ENCODE measurements at regions of chr9 and their contacts with region 1.

Region 1: DNA sequence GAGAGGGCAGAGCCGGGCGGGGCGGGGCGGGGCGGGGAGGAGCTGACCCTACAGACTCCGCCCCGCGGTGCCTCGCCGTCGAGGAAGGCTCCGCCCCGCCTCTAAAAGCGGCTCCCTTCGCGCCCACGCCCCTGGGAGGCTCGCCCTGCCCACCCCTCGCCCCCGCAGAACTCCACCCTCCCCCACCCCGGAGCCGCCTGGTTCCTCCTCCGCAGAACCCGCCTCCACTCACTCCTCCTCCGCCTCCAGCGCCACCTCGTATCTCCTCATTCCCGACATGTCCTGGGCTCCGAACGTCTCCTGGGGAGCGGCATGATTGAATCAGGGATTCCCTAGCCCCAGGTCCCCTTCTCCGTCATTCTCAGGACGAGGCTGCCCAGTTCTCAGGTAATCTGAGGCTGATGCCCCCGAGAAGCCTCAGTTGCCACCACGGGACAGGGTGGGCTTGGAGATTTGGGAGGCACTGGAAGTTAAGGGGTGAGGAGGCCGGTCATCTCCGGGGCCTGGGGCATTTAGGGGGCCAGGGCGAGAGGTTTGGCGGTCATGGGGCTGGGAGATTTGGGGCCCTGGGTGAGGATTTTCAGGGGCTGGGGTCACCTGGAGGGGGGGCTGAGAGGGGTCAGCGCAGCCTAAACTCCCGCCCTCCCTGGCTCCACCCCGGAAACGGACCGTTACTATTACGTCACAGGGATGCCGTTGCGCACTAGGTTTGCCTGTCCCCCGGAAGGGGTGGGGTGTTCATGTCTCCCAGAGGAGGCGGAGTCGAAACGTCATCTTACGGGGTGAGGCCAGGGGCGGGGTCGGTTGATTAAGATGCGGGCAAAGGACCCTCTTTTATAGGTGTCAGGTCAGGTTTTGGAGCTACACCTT is 3.2 kb upstream of the CCL27 start:
- DNase-seq: peak; percentile 79
- H3K4me3 ChIP-seq: peak overlapping the region; percentile 49 to 69 (median 64)
- H3K27ac ChIP-seq: peak overlapping the region; percentile 78
- H3K4me1 ChIP-seq: peaks cover 5% of the 10 kb centered on the region
- H3K27me3 ChIP-seq: no peaks in the 10 kb centered on the region
- CTCF ChIP-seq: no peak
- POLR2A ChIP-seq: peak; percentile 71

Region 2: DNA sequence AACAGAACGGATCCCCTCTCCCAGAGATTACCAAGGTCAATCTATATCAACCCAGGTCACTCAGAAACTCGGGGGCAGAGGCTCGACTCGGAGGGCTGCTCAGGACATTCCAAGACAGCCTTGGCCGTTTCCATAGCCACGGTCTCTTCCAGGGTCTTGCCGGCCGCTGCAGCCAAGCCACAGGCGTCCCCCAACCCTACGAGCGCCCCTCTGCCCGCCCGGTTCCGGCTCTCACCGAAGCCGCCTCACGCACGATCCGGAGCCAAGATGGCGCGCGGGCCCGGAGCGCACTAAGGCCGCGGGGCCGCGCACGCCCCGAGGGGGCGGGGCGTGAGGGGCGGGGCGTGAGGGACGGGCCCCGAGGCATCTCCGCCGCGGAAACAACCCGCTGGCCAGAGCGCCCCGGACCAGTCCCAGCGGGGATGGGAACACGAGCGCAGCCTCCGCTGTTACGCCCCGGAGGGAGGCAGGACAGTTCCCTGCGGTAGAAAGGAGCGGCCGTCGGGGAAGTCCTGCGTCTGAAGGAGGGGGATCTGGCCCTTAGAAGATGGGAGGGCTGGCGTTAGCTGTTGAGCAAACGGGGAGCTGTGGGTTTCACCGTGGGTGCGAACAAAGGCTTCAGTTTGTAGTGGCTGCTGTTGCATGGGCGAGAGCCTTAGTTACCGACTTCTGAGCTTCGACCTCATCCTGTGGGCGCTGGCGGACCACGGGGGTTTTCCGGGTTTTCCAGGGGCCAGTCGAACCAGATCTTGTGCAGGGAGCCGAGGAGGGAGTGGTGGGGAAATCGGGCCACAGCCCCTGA is 53.6 kb before region 1 on chr9 and contains the start of gene RPP25L:
- CTCF ChIA-PET with region 1: interaction called, 3 read pairs
- POLR2A ChIA-PET with region 1: no interaction called
- dilution Hi-C with region 1: no loop called
- intact Hi-C with region 1: loop called (anchors 2 kb)
- DNase-seq: peak; percentile 83
- H3K4me3 ChIP-seq: peak within 1 kb of the TSS; percentile 41 to 79 (median 77)
- H3K27ac ChIP-seq: peak within 1 kb of the TSS; percentile 72
- H3K4me1 ChIP-seq: peaks cover 13% of the 10 kb centered on the region
- H3K27me3 ChIP-seq: no peaks in the 10 kb centered on the region
- CTCF ChIP-seq: no peak
- POLR2A ChIP-seq: peak; percentile 87
- total RNA-seq, gene RPP25L: 15.1 and 15.7 TPM in 2 replicates

Region 3: DNA sequence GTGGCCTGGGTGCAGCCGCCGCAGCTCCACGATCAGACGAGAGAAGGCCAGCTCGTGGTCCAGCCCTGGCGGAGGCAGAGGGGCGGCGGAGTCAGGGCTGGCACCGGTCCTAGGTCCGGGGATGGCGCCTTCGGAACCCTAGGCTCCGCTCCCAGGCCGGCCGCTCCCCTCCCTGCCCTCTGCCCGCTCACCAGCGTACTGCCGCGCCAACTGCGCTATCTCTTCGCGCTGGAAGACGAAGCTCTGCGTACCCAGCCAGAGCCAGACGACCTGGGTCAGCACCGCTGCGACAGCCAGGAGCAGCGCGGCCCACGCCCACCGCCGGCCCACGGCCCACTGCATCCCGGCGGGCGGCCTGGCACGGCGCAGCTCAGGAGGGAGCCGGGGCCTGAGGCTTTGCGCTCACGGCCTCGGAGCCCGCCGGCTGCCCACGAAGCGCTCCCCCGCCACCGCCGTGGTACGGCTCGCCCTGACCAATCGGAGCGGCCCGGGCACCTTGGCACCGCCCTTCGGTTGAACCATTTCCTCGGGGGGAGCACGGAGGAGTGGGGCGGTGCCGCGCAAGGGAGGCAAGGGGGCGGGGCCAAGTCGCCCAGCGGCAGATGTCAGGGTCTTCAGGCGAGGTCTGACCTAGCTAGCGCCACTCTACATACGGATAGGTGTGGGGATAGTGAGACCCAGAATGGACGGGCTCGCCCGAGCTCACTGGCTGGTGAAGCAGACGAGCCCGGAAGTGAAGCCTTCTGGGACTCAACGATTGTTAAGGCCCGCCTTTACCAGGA is 28.1 kb before region 1 on chr9 and contains the start of gene SIGMAR1:
- CTCF ChIA-PET with region 1: interaction called, 10 read pairs
- POLR2A ChIA-PET with region 1: interaction called, 3 read pairs
- dilution Hi-C with region 1: no loop called
- intact Hi-C with region 1: loop called (anchors 2 kb)
- DNase-seq: peak; percentile 91
- H3K4me3 ChIP-seq: peak within 1 kb of the TSS; percentile 10 to 63 (median 47)
- H3K27ac ChIP-seq: peak within 1 kb of the TSS; percentile 33
- H3K4me1 ChIP-seq: peaks cover 16% of the 10 kb centered on the region
- H3K27me3 ChIP-seq: no peaks in the 10 kb centered on the region
- CTCF ChIP-seq: no peak
- POLR2A ChIP-seq: peak; percentile 81
- total RNA-seq, gene SIGMAR1: 74.1 and 81.2 TPM in 2 replicates

Region 4: GRCh38 chr9:34646211-34647083 is 19.2 kb before region 1 on chr9 and contains the start of gene GALT:
- CTCF ChIA-PET with region 1: interaction called, 12 read pairs
- POLR2A ChIA-PET with region 1: interaction called, 7 read pairs
- dilution Hi-C with region 1: no loop called
- intact Hi-C with region 1: no loop called
- DNase-seq: peak; percentile 88
- H3K4me3 ChIP-seq: peak within 1 kb of the TSS; percentile 53 to 78 (median 75)
- H3K27ac ChIP-seq: peak within 1 kb of the TSS; percentile 41
- H3K4me1 ChIP-seq: peaks cover 17% of the 10 kb centered on the region
- H3K27me3 ChIP-seq: no peaks in the 10 kb centered on the region
- CTCF ChIP-seq: peak in 1 of 2 donors; percentile 54
- POLR2A ChIP-seq: peak; percentile 51
- total RNA-seq, gene GALT: 30.0 and 36.6 TPM in 2 replicates

Region 5: GRCh38 chr9:34651876-34652601 is 13.6 kb before region 1 on chr9 and contains the start of gene IL11RA:
- CTCF ChIA-PET with region 1: interaction called, 12 read pairs
- POLR2A ChIA-PET with region 1: interaction called, 7 read pairs
- dilution Hi-C with region 1: no loop called
- intact Hi-C with region 1: loop called (anchors 1 kb)
- DNase-seq: peak; percentile 82
- H3K4me3 ChIP-seq: peak within 1 kb of the TSS; percentile 0 to 27 (median 13)
- H3K27ac ChIP-seq: no peak within 1 kb of the TSS
- H3K4me1 ChIP-seq: peaks cover 32% of the 10 kb centered on the region
- H3K27me3 ChIP-seq: no peaks in the 10 kb centered on the region
- CTCF ChIP-seq: no peak
- POLR2A ChIP-seq: no peak
- total RNA-seq, gene IL11RA: 13.6 and 15.3 TPM in 2 replicates